Activated B cell treated with CpG ODN at 0.5 μM for 24 hours (primary cell): ENCODE measurements at regions of chr2 and their contacts with region 1.

Region 1: DNA sequence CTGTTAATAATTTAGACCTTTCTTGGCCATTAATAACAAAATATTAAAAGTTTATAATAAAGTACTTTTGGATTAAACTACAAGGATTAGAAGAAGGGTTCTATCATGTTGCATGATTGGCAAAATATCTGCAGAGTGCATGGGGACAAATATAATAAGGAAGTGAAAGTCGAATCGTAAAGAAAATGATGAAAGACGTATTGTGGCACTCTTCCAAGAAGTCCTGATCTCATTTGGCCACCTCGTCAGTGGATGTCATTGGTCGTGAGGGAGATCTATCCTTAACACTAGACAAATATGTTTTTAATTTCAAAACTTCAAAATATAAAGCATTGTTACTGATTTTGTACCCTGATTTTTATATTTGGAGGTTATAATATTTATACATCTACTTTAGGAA is 197.7 kb upstream of the STON1 start:
- DNase-seq: no peak
- ATAC-seq: peak; percentile 83
- H3K4me3 Mint-ChIP-seq: no peak overlapping the region
- H3K27ac Mint-ChIP-seq: peak overlapping the region; percentile 76
- H3K4me1 Mint-ChIP-seq: peaks cover 51% of the 10 kb centered on the region
- H3K27me3 Mint-ChIP-seq: no peaks in the 10 kb centered on the region
- CTCF ChIP-seq: no peak

Region 2: GRCh38 chr2:48343571-48344440 is 11.5 kb after region 1 on chr2:
- CTCF ChIA-PET with region 1: no interaction called
- POLR2A ChIA-PET with region 1: interaction called, 5 read pairs
- intact Hi-C with region 1: loop called (anchors 1 kb)
- DNase-seq: no peak
- ATAC-seq: peak; percentile 50
- H3K4me3 Mint-ChIP-seq: peak overlapping the region; percentile 41
- H3K27ac Mint-ChIP-seq: peak overlapping the region; percentile 9
- H3K4me1 Mint-ChIP-seq: peaks cover 39% of the 10 kb centered on the region
- H3K27me3 Mint-ChIP-seq: no peaks in the 10 kb centered on the region
- CTCF ChIP-seq: no peak